Dendritic cell treated with granulocyte-macrophage colony-stimulating factor and Interleukin-4, amounts not matched to agents 40 ng/mL and 50 ng/mL, for 4 days (primary cell): ENCODE measurements at regions of chr6 and their contacts with region 1.

Region 1: GRCh38 chr6:122673343-122673961 is 63.2 kb downstream of the PKIB start:
- H3K4me3 Mint-ChIP-seq: no peak overlapping the region
- H3K27ac Mint-ChIP-seq: no peak overlapping the region
- H3K4me1 Mint-ChIP-seq: peaks cover 10% of the 10 kb centered on the region
- H3K27me3 Mint-ChIP-seq: peaks cover 7% of the 10 kb centered on the region

Region 2: DNA sequence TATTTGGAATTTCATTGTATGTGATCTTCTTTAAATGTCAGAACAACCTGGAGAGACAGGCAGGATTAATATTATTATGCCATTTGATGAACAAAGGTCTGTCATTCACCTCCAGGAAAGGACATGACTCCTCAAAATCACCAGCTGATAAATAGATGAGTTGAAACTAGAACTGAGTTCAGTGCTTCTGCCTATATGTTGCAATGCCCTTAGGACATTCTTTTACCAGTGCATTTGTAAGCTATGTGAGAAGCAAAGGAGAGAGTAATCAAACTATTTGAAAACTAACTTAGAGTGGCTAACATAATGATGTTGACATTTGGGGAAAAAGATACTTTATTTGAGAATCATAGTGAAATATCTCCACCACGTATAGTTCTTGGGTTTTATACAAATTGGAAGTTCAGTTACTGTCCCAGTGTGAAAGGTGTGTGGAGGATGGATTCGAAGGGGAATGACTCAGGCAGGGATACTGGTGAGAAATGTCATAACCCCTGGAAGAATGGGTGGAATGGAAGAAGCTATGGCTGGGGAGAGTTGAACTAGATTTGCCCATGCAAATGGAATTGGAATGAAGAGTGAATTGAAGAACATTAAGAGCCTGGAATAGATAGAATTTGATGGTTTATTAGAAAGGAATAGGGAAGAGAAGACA is 41.8 kb before region 1 on chr6:
- intact Hi-C with region 1: no loop called
- H3K4me3 Mint-ChIP-seq: no peak overlapping the region
- H3K27ac Mint-ChIP-seq: no peak overlapping the region
- H3K4me1 Mint-ChIP-seq: no peaks in the 10 kb centered on the region
- H3K27me3 Mint-ChIP-seq: peaks cover 3% of the 10 kb centered on the region

Region 3: GRCh38 chr6:122657601-122658000 is 15.9 kb before region 1 on chr6:
- intact Hi-C with region 1: loop called (anchors 1 kb)
- H3K4me3 Mint-ChIP-seq: no peak overlapping the region
- H3K27ac Mint-ChIP-seq: no peak overlapping the region
- H3K4me1 Mint-ChIP-seq: no peaks in the 10 kb centered on the region
- H3K27me3 Mint-ChIP-seq: peaks cover 2% of the 10 kb centered on the region

Region 4: DNA sequence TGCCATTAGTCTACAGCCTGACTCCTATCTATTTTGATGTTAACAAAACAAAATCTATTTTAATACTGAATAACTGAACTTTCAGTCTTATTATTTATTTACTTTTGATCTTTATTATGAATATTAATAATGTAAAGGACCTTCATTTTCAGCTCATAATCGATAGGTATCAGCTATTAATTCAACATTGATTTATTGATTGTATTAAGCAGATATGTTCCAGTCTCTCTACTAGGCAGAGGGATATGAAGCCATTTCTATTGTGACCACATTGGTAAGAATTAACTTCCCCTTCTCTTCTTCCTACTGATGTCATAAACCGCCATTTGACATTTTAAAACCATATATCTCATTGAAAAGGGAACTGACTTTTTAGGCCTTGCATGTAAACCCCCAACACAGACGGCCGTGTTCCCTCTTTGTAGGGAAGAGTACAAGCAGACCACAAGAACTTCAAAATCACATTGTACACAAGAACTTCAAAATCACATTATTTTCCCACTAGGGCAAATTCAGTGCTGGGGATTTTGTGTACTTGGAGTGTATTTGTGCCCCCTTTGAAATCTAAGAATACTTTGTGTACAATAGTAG is 36.6 kb after region 1 on chr6:
- intact Hi-C with region 1: loop called (anchors 5 kb)
- H3K4me3 Mint-ChIP-seq: no peak overlapping the region
- H3K27ac Mint-ChIP-seq: peak overlapping the region; percentile 66
- H3K4me1 Mint-ChIP-seq: peaks cover 19% of the 10 kb centered on the region
- H3K27me3 Mint-ChIP-seq: peaks cover 19% of the 10 kb centered on the region

Region 5: DNA sequence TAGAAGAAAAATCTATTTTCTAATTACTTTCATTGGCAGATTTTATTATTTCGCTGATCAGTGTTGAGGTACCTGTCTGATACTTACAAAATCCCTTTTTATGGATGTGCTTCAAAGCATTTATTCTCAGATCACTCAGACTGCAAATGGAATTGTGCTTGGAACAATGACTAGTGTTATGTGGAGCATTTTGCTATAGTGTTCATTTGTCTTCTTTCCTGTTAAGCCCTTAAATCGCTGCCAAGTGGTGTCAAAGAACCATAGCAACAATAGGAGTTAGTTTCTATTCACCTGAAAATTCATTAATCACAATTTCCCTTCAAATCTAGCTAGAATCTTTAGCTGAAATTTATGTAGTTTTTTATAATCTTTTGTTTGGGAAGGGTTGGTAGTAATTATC is 145.4 kb after region 1 on chr6:
- intact Hi-C with region 1: no loop called
- H3K4me3 Mint-ChIP-seq: no peak overlapping the region
- H3K27ac Mint-ChIP-seq: no peak overlapping the region
- H3K4me1 Mint-ChIP-seq: no peaks in the 10 kb centered on the region
- H3K27me3 Mint-ChIP-seq: peaks cover 2% of the 10 kb centered on the region